Endothelial cell of umbilical vein (primary cell): ENCODE measurements at regions of chr2 and their contacts with region 1.

Region 1: GRCh38 chr2:38750891-38751595 is at the start of gene SRSF7:
- DNase-seq: peak; percentile 99
- H3K4me3 ChIP-seq: peak within 1 kb of the TSS; percentile 54 to 92 (median 72)
- H3K27ac ChIP-seq: peak within 1 kb of the TSS; percentile 85
- H3K4me1 ChIP-seq: peaks cover 36% of the 10 kb centered on the region
- H3K27me3 ChIP-seq: no peaks in the 10 kb centered on the region
- CTCF ChIP-seq: no peak
- POLR2A ChIP-seq: peak; percentile 100
- total RNA-seq, gene SRSF7: 202 and 204 TPM in 2 replicates

Region 2: GRCh38 chr2:37068686-37069085 is 1682.4 kb before region 1 on chr2:
- CTCF ChIA-PET with region 1: no interaction called
- POLR2A ChIA-PET with region 1: no interaction called
- dilution Hi-C with region 1: no loop called
- intact Hi-C with region 1: no loop called
- DNase-seq: no peak
- H3K4me3 ChIP-seq: no peak overlapping the region
- H3K27ac ChIP-seq: no peak overlapping the region
- H3K4me1 ChIP-seq: no peaks in the 10 kb centered on the region
- H3K27me3 ChIP-seq: no peaks in the 10 kb centered on the region
- CTCF ChIP-seq: no peak
- POLR2A ChIP-seq: no peak

Region 3: DNA sequence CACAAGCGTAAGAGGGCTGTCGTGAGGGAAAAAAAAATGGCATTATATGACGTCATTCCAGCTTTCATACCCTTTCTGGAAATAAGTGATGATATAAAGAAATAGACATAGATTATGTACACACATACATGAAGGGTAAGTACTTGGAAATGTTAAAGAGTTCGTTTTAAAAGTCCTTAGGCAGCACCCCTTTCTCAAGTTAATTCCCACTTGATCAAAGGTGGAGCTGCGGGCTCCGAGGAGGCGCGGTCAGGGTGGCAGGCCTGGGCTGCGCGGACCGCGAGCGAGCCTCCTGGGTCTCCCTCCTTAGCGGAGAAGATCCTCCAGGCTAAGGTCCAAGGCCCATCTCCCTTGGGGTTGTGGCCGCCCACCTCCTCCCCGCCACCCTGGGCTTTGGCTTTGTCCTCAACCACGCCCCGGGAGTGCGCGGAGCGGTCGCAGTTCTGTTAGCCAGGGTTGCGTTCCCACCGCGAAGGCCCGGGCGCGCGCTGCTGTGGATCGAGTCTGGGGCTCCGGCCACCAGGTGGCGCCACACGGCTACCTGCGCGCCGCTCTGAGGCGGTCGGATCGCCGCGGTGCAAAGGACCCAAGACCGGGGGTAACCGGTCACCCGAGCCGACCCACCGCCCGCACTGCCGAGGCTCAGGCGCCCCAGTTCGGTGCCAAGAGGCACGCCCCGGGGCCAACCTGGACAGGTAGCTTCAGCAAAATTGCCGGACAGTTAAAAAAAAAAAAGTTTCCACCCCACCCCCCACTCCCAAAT is 215.1 kb before region 1 on chr2:
- CTCF ChIA-PET with region 1: no interaction called
- POLR2A ChIA-PET with region 1: interaction called, 11 read pairs
- dilution Hi-C with region 1: no loop called
- intact Hi-C with region 1: no loop called
- DNase-seq: peak; percentile 75
- H3K4me3 ChIP-seq: peak overlapping the region; percentile 34 to 57 (median 52)
- H3K27ac ChIP-seq: no peak overlapping the region
- H3K4me1 ChIP-seq: no peaks in the 10 kb centered on the region
- H3K27me3 ChIP-seq: no peaks in the 10 kb centered on the region
- CTCF ChIP-seq: peak; percentile 94 to 96
- POLR2A ChIP-seq: no peak

Region 4: GRCh38 chr2:38602732-38603401 is 148.2 kb before region 1 on chr2 and contains the start of gene HNRNPLL:
- CTCF ChIA-PET with region 1: interaction called, 3 read pairs
- POLR2A ChIA-PET with region 1: interaction called, 64 read pairs
- dilution Hi-C with region 1: no loop called
- intact Hi-C with region 1: loop called (anchors 2 kb)
- DNase-seq: peak; percentile 98
- H3K4me3 ChIP-seq: peak within 1 kb of the TSS; percentile 95 to 99 (median 98)
- H3K27ac ChIP-seq: peak within 1 kb of the TSS; percentile 62
- H3K4me1 ChIP-seq: peaks cover 23% of the 10 kb centered on the region
- H3K27me3 ChIP-seq: no peaks in the 10 kb centered on the region
- CTCF ChIP-seq: no peak
- POLR2A ChIP-seq: peak; percentile 97
- total RNA-seq, gene HNRNPLL: 56.2 and 61.1 TPM in 2 replicates

Region 5: GRCh38 chr2:38653715-38654527 is 97.1 kb before region 1 on chr2:
- CTCF ChIA-PET with region 1: no interaction called
- POLR2A ChIA-PET with region 1: no interaction called
- dilution Hi-C with region 1: no loop called
- intact Hi-C with region 1: no loop called
- DNase-seq: no peak
- H3K4me3 ChIP-seq: no peak overlapping the region
- H3K27ac ChIP-seq: no peak overlapping the region
- H3K4me1 ChIP-seq: no peaks in the 10 kb centered on the region
- H3K27me3 ChIP-seq: peaks cover 0 to 2% of the 10 kb centered on the region in 2 experiments
- CTCF ChIP-seq: no peak
- POLR2A ChIP-seq: no peak

Region 6: DNA sequence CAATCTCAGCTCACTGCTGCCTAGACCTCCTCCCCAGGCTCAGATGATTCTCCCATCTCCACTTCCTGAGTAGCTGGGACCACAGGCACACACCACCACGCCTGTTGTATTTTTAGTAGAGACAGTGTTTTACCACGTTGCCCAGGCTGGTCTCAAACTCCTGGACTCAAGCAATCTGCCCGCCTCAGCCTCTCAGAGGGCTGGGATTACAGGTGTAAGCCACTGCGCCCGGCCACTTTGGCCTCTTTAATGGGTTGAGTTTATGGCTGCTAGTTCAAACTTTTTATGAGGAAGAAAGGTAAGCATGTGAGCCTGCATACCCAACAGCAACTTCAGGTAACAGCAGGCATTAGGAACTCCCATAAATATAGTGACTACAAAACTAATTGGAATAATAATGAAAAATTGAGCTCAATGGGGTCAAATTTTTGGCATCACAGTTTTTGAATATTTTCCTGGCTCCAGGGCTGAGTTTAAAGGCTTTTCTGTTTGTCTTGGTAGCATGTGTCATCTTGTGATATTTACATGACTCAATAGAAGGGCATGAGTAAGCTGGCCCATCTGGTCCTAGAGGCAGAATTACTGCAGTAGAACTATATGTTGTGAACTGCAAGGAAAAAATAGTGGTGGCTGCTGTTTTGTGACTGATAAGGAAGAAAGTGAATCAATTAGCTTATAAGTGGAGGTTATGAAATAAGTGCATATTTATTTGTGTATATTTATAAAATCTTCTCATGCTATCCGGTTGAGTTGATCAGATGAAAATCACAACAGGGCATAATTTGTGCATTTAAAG is 60.3 kb before region 1 on chr2:
- CTCF ChIA-PET with region 1: no interaction called
- POLR2A ChIA-PET with region 1: interaction called, 11 read pairs
- dilution Hi-C with region 1: no loop called
- intact Hi-C with region 1: no loop called
- DNase-seq: peak; percentile 87
- H3K4me3 ChIP-seq: no peak overlapping the region
- H3K27ac ChIP-seq: peak overlapping the region; percentile 69
- H3K4me1 ChIP-seq: peaks cover 12% of the 10 kb centered on the region
- H3K27me3 ChIP-seq: no peaks in the 10 kb centered on the region
- CTCF ChIP-seq: no peak
- POLR2A ChIP-seq: no peak

Region 7: DNA sequence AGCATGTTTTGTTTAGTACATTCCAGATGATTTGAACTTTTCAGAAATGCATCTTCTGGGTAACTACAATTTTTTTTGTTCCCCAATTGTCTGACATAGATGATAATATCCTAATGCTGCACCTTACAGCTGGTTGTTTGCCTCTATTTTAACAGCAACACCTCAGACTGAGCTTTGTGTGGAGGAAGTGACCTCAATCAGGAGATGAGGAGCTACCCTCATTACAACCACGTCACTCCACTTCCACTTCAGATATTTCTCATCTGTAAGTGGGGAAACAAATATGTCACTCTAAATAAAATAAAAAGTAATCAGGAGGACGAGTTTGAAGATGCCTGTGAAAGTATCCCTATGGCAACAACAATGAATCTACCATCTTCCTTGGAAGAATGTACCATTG is 12.2 kb after region 1 on chr2:
- CTCF ChIA-PET with region 1: no interaction called
- POLR2A ChIA-PET with region 1: interaction called, 29 read pairs
- dilution Hi-C with region 1: no loop called
- intact Hi-C with region 1: no loop called
- DNase-seq: no peak
- H3K4me3 ChIP-seq: no peak overlapping the region
- H3K27ac ChIP-seq: no peak overlapping the region
- H3K4me1 ChIP-seq: no peaks in the 10 kb centered on the region
- H3K27me3 ChIP-seq: no peaks in the 10 kb centered on the region
- CTCF ChIP-seq: no peak
- POLR2A ChIP-seq: no peak

Region 8: GRCh38 chr2:38778687-38779082 is 27.6 kb after region 1 on chr2:
- CTCF ChIA-PET with region 1: no interaction called
- POLR2A ChIA-PET with region 1: interaction called, 16 read pairs
- dilution Hi-C with region 1: no loop called
- intact Hi-C with region 1: loop called (anchors 1 kb)
- DNase-seq: no peak
- H3K4me3 ChIP-seq: peak overlapping the region; percentile 37 to 91 (median 91)
- H3K27ac ChIP-seq: peak overlapping the region; percentile 58
- H3K4me1 ChIP-seq: peaks cover 9% of the 10 kb centered on the region
- H3K27me3 ChIP-seq: peaks cover 3 to 4% of the 10 kb centered on the region in 2 experiments
- CTCF ChIP-seq: no peak
- POLR2A ChIP-seq: no peak

Region 9: GRCh38 chr2:38835015-38835601 is 84.1 kb after region 1 on chr2:
- CTCF ChIA-PET with region 1: interaction called, 3 read pairs
- POLR2A ChIA-PET with region 1: interaction called, 8 read pairs
- dilution Hi-C with region 1: no loop called
- intact Hi-C with region 1: loop called (anchors 1 kb)
- DNase-seq: peak; percentile 40
- H3K4me3 ChIP-seq: no peak overlapping the region
- H3K27ac ChIP-seq: no peak overlapping the region
- H3K4me1 ChIP-seq: no peaks in the 10 kb centered on the region
- H3K27me3 ChIP-seq: no peaks in the 10 kb centered on the region
- CTCF ChIP-seq: peak; percentile 17 to 35
- POLR2A ChIP-seq: no peak